OCI-LY7 (cell line): ENCODE measurements at regions of chr4 and their contacts with region 1.

Region 1: GRCh38 chr4:38015886-38016515 is 55.8 kb downstream of the PTTG2 start:
- DNase-seq: no peak
- H3K4me3 ChIP-seq: no peak overlapping the region
- H3K27ac ChIP-seq: no peak overlapping the region
- H3K4me1 ChIP-seq: peaks cover 9% of the 10 kb centered on the region
- CTCF ChIP-seq: no peak

Region 2: GRCh38 chr4:38030023-38030422 is 14.0 kb after region 1 on chr4:
- CTCF ChIA-PET with region 1: no interaction called
- POLR2A ChIA-PET with region 1: interaction called, 12 read pairs
- intact Hi-C with region 1: no loop called
- DNase-seq: no peak
- H3K4me3 ChIP-seq: no peak overlapping the region
- H3K27ac ChIP-seq: no peak overlapping the region
- H3K4me1 ChIP-seq: peaks cover 12% of the 10 kb centered on the region
- CTCF ChIP-seq: no peak